Common myeloid progenitor, CD34-positive (primary cell): ENCODE measurements at regions of chr6 and their contacts with region 1.

Region 1: GRCh38 chr6:20126789-20127653 is 85.2 kb downstream of the MBOAT1 start:
- DNase-seq: peak; percentile 56 to 74 (median 66)
- H3K4me3 ChIP-seq: no peak overlapping the region
- H3K27ac ChIP-seq: no peak overlapping the region
- H3K4me1 ChIP-seq: peaks cover 0 to 8% (median 2%) of the 10 kb centered on the region in 4 experiments
- H3K27me3 ChIP-seq: no peaks in the 10 kb centered on the region

Region 2: GRCh38 chr6:18861204-18861603 is 1265.8 kb before region 1 on chr6:
- CTCF ChIA-PET with region 1: no interaction called
- POLR2A ChIA-PET with region 1: no interaction called
- DNase-seq: no peak
- H3K4me3 ChIP-seq: no peak overlapping the region
- H3K27ac ChIP-seq: no peak overlapping the region
- H3K4me1 ChIP-seq: no peaks in the 10 kb centered on the region
- H3K27me3 ChIP-seq: no peaks in the 10 kb centered on the region

Region 3: GRCh38 chr6:20092071-20092566 is 34.9 kb before region 1 on chr6:
- CTCF ChIA-PET with region 1: interaction called, 32 read pairs
- POLR2A ChIA-PET with region 1: no interaction called
- DNase-seq: peak; percentile 74 to 84 (median 82)
- H3K4me3 ChIP-seq: no peak overlapping the region
- H3K27ac ChIP-seq: no peak overlapping the region
- H3K4me1 ChIP-seq: no peaks in the 10 kb centered on the region
- H3K27me3 ChIP-seq: no peaks in the 10 kb centered on the region

Region 4: DNA sequence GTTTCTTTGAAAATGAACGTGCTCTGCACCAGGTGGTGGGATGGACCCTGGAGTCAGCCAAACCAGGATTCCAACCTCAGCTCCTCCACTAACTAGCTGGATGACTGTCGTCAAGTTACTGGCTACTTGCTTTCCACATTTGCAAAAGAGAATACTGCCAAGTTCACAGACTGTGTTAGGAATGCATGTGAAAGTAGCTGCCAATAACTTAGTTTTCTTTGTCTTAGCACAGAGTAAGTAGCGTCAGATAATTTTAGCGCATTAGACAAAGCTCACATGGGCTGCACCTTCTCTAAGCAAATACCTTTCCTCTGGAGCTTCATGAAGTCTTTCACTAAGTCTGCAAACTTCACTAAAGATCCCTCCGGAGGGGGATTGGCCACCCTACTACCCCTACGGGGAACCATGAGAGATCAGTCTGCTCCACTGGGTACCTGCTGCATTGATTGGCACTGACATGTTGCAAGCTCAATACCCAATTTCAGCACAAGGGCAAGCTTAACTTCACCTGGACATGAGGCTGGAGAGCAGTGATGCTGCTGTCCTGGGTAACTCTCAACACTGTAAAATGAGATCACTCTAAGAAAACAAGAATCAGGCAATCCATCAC is 28.6 kb before region 1 on chr6:
- CTCF ChIA-PET with region 1: interaction called, 32 read pairs
- POLR2A ChIA-PET with region 1: no interaction called
- DNase-seq: no peak
- H3K4me3 ChIP-seq: no peak overlapping the region
- H3K27ac ChIP-seq: no peak overlapping the region
- H3K4me1 ChIP-seq: no peaks in the 10 kb centered on the region
- H3K27me3 ChIP-seq: no peaks in the 10 kb centered on the region

Region 5: DNA sequence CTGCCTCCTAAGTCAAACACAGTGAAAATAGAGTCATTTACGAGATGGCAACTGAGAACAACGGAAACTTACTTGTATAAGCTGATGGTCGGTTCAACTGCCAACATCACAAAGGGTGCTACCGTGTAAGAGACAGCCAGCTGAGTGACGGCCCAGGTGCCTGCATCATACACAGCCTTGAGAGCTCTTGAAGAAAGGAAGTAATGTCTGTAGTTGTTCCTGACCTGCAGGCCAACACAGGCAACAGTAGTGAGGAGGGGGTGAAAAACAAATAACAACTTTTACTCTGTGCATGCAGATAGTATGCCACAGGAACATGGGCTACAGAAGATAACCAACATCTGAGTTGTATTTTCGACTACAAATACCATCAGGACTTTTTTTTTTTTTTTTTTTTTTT is 17.5 kb before region 1 on chr6:
- CTCF ChIA-PET with region 1: interaction called, 38 read pairs
- POLR2A ChIA-PET with region 1: no interaction called
- DNase-seq: peak; percentile 76 to 87 (median 80)
- H3K4me3 ChIP-seq: peak overlapping the region in 1 of 7 experiments; percentile 16
- H3K27ac ChIP-seq: peak overlapping the region; percentile 42 to 80
- H3K4me1 ChIP-seq: peaks cover 0 to 9% (median 3%) of the 10 kb centered on the region in 4 experiments
- H3K27me3 ChIP-seq: no peaks in the 10 kb centered on the region